ENCODE measurements at regions of chr17 and their contacts with region 1.

Region 1: GRCh38 chr17:82518826-82519810 is at the start of gene FOXK2:
- DNase-seq: peak; percentile 71
- H3K4me3 ChIP-seq: peak within 1 kb of the TSS; percentile 70
- CTCF ChIP-seq: no peak

Region 2: DNA sequence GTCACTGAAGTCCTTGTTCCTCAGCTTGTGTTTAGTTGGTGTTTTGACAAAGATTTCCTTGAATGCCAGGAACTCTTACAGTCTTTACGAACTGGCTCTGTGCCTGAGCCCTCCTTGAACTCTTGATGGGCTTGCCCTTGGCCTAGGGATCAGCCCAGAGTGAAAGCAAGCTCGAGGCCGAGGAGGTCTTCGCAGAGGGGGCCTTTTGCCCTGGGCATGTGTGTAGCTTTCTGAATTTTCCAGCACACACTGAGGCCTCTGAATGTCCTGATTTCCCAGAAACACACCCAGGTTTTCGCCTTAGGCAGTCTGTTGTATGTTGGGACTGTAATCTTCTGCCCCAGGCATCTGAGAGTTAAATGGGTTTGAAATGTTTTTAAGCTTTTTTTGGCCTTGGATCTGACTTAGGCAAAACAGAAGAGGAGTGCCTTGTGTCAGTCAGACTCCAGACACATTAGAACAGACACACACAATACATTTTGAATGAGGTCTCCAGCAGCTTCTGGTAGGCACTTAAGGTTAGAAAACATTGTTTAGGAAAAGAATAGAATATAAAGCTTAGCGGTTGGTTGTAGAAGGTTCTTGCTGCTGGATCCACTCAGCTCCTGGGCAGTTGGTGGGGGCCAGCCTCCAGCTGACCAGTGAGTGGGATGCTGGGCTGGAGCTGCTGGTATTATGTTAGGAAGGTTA is 17.5 kb after region 1 on chr17:
- CTCF ChIA-PET with region 1: interaction called, 24 read pairs
- POLR2A ChIA-PET with region 1: interaction called, 11 read pairs
- DNase-seq: no peak
- H3K4me3 ChIP-seq: peak overlapping the region; percentile 33
- CTCF ChIP-seq: no peak

Region 3: GRCh38 chr17:82592767-82593589 is 73.9 kb after region 1 on chr17:
- CTCF ChIA-PET with region 1: no interaction called
- POLR2A ChIA-PET with region 1: no interaction called
- DNase-seq: no peak
- H3K4me3 ChIP-seq: peak overlapping the region; percentile 65
- CTCF ChIP-seq: no peak

Region 4: GRCh38 chr17:82636626-82637598 is 117.8 kb after region 1 on chr17:
- CTCF ChIA-PET with region 1: no interaction called
- POLR2A ChIA-PET with region 1: no interaction called
- DNase-seq: no peak
- H3K4me3 ChIP-seq: no peak overlapping the region
- CTCF ChIP-seq: no peak

Region 5: DNA sequence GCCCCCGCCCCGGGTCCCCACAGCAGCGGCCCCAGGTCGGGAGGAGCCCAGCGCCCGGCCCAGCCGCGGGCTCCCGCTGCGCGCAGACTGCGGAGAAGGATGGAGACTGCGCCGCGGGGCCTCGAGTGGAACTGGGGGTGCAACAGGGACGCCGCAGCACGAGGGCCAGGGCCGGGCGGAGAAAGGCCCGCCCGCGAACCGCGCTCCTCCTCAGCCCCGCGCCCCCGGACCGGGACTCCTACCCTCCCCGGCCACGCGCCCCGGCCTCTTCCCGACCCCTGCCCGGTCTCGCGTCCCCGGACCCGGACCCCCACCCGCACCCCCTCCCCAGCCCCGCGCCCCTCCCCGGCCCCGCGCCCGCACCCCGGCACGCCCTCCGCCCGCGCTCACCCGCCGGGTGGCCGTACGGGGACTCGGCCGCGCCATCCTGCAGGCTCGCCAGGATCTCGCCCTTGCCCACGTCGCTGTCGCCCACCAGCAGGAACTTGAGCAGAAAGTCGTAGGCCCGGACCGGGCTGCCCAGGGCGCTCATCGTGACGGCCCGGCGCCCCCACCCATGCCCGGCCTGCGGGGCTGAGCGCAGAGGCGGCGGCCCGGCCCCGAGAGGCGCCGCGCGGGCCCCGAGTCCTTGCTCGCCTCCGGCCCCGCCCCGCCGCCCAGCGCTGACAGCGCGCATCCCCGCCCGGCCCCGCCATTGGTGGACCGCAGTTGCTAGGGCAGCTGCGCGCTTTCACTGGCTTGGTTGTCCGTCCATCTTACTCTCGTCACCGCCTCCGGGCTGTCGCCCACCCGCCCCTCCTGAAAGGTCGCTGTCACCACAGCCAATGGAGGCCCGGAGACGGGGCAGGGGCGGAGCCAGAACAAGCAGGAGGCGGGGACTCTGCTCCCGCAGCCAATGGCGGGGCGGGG is 179.2 kb after region 1 on chr17 and contains the start of gene RAB40B:
- CTCF ChIA-PET with region 1: no interaction called
- POLR2A ChIA-PET with region 1: no interaction called
- DNase-seq: peak; percentile 85
- H3K4me3 ChIP-seq: peak within 1 kb of the TSS; percentile 76
- CTCF ChIP-seq: no peak